Cardiac septum (tissue), 1 donor: ENCODE measurements at regions of chr12 and their contacts with region 1.

Region 1: DNA sequence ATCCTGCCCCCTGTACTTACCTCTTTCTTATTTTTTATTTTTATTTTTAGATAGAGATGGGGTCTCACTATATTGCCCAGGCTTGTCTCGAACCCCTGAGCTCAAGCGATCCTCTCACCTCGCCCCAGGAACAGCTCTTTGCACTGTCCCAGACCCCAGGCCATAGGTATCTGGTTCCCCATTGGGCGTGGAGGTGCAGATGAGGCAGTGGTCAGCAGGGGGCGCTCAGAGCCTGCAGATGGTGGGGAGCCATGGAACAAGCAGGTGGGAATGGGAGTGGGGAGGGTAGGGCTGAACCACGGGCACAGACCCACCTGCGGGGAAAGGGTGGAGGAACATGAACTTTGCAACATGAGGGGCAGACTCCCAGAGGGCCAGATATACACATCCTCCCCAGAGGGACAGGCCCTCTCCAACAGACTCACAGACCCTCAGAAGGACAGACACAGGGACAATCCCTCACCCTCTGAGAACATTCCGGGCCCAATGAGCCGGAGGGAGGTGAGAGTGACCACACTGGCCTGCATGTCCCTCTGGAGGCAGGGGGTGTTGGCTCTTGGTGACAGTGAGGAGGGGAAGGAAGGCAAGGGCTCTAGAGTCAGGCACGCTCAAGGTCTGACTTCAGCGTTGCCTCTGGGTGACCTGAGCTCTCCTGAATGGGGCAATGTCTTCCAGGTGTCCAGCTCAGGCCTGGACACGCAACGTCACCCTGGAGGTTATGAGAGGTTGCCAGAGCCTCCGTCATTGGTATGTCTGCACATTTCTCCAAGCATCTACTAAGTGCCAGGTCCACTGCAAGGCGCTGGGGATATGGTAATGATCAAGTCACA is 34.9 kb downstream of the KRT80 start:
- DNase-seq: peak; percentile 90

Region 2: DNA sequence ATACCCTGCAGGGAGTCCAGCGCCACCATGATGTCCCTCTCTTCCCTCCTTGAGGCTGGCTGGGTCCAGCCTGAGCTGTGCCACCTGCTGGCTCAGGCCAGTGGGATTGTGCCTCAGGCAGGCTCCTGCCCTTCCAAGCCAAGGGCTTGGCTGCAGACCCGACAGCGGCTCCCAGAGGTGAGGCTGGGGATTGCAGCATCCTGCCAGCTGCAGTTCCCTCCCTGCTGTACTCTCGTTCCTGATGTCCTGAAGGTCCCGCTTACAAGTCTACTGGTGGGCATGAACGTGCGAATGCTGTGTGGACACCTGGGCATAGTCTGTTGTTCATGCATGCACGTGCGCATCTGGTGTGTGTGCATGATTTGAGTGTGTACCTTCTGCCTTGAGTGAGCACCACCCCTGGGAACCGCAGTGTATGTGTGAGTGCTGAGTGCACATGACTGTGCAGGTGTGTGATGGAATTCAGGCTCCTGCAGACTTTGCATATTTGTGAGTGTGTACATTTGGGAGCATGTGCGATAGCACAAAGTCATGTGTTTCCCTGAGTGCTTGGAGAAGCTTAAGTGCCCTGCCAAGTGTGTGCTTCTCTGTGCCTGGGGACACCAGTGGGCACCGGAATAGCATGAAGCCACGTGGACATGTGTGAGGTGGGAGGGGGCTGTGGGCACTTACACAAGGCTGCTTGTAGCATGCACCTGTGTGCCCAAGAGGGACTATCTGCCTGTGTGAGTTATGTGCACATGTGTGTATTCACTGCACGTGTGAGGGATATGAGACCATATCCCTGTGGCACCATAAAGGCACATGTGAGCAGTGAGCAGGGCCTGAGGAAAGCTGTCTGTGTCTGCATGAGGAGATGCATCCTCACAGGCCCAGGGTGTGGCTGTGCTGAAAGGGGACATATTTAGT is 56.8 kb after region 1 on chr12:
- intact Hi-C with region 1: loop called (anchors 2 kb)
- DNase-seq: peak; percentile 91

Region 3: DNA sequence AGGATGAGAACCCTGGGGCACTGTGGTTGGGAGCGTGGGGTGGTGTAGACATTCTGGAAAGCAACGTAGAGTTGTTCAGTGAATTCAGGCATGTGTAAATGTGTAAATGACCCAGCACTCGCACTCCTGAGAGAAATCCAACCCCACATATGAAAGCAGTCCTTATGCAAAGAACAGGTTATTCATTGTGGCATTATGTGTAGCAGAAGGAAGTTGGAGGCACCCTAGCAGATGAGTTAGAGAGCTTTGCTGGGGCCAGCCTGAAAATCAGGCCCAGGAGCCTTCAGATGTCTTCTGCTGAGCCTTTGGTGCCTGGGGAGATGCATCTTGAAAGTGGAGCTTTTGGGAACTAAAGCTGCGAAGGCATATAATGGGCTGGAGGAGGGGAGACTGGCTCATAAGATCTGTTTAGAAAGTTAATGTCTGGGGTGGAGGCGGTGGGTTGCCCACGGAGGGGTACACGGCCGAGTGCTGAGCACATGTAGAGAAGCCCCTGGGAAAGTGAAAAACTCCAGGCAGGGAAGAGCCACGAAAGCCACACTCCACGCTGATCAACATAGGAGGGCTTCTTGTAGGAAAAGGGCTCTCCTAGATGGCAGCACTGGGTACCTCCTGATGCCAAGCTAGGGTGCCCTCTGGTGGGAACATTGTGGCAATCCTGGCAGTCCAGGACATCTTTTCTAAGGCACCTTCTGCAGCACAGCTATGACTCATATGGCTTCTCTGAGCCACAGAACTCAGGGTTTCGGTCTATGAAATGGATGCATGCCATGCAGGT is 170.3 kb after region 1 on chr12:
- intact Hi-C with region 1: loop called (anchors 1 kb)
- DNase-seq: peak; percentile 82

Region 4: GRCh38 chr12:52506858-52507715 is 350.1 kb after region 1 on chr12:
- intact Hi-C with region 1: loop called (anchors 5 kb)
- DNase-seq: peak; percentile 38

Region 5: DNA sequence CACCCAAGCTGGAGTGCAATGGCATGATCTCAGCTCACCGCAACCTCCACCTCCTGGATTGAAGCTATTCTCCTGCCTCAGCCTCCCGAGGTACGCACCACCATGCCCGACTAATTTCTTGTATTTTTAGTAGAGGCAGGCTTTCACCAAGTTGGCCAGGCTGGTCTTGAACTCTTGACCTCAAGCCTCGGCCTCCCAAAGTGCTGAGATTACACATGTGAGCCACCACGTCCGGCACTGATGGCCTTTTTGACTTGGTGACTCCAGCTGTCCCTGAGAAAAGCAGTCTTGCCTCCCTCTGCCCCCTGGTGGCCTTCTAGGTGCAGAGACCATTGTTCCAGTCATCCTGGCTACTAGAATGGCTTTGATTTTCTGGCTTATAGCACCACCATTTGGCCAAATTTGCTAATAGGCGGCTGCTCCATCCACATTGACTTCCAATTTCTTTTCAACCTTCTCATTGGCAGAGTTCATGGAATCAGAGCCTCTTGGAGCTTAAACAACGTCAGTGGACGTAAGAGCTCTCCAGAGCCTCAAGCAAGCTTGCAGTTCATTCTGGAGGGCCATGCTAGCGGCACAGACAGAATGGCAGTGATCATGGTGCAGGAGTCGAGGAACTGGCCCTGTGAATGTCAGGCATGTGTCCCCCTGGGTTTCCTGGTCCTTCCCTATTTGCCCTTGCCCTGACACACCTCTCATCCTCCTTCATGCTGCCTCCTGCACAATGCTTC is 823.9 kb after region 1 on chr12:
- intact Hi-C with region 1: loop called (anchors 5 kb)
- DNase-seq: peak; percentile 88